ENCODE measurements at regions of chr4 and their contacts with region 1.

Region 1: GRCh38 chr4:44927399-44928380 is 201.3 kb upstream of the GNPDA2 start:
- DNase-seq: peak; percentile 23
- ATAC-seq: peak; percentile 57; the same call in 2 of the 3 replicates
- H3K4me3 ChIP-seq: no peak overlapping the region
- H3K27ac ChIP-seq: no peak overlapping the region
- H3K4me1 ChIP-seq: no peaks in the 10 kb centered on the region
- H3K27me3 ChIP-seq: no peaks in the 10 kb centered on the region
- CTCF ChIP-seq: peak; percentile 42
- EP300 ChIP-seq: no peak
- POLR2A ChIP-seq: no peak
- RAD21 ChIP-seq: no peak

Region 2: DNA sequence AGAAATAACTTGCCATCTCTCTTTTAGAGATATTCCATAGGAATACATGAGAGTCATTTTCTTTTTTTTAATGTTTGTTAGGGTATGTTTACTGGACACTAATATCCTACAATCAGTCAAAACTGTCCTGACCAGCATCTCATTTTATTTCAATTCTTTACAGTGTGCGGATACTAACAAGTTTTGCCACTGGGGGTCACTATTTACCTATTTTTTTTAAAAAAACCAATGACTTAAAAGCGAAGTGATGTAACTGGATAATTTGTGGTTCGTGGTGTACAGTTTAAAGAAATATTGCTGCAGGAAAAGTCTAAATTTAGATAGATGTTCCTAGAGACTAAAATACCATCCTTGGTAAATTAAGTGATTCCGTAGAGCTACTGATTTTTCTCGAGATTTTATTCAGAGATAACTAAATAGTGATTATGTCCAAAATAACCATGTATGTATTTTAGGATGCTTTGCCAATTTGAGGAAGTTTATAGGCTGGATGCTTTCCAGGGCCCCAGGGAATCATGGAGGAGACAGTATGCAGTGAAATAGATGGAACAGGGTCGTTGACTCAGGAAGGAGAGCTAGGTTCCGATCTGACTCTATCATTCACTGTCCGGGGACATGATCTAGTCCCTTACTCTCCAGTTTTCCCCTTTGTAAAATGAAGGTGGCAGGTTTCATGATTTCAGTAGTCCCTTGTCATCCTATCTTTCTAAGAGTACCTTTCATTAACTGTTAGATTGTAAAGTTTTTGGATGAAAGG is 167.4 kb before region 1 on chr4:
- CTCF ChIA-PET with region 1: no interaction called
- POLR2A ChIA-PET with region 1: no interaction called
- in situ Hi-C with region 1: no loop called
- intact Hi-C with region 1: loop called (anchors 5 kb)
- DNase-seq: peak; percentile 7
- ATAC-seq: peak; percentile 67
- H3K4me3 ChIP-seq: no peak overlapping the region
- H3K27ac ChIP-seq: no peak overlapping the region
- H3K4me1 ChIP-seq: no peaks in the 10 kb centered on the region
- H3K27me3 ChIP-seq: no peaks in the 10 kb centered on the region; a peak in 1 of 5 replicates
- CTCF ChIP-seq: peak; percentile 46; the same call in 1 of the 2 replicates
- EP300 ChIP-seq: no peak
- POLR2A ChIP-seq: no peak
- RAD21 ChIP-seq: no peak

Region 3: DNA sequence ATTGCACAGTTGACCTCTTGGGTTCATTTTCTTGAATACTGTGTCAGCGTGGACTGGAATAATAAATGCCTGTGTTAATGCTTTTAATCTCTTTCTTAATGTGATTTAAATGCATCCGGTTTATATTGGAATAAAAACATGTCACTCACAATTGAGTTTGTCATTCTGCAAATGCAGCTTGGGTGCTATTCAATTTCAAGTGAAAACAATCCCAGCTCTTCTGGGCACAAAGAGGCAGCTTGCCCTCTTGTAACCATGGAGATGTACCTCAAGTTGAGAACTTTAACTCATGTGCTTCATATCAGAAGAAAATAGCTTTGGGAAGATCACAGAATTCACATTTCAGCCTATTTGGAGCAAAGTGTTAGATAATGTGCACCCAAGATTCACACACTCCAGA is 154.4 kb after region 1 on chr4:
- CTCF ChIA-PET with region 1: no interaction called
- POLR2A ChIA-PET with region 1: no interaction called
- in situ Hi-C with region 1: no loop called
- intact Hi-C with region 1: no loop called
- DNase-seq: no peak
- ATAC-seq: no peak
- H3K4me3 ChIP-seq: no peak overlapping the region
- H3K27ac ChIP-seq: no peak overlapping the region
- H3K4me1 ChIP-seq: no peaks in the 10 kb centered on the region
- H3K27me3 ChIP-seq: no peaks in the 10 kb centered on the region
- CTCF ChIP-seq: no peak
- EP300 ChIP-seq: no peak
- POLR2A ChIP-seq: no peak
- RAD21 ChIP-seq: no peak

Region 4: GRCh38 chr4:45147866-45148265 is 220.2 kb after region 1 on chr4:
- CTCF ChIA-PET with region 1: no interaction called
- POLR2A ChIA-PET with region 1: no interaction called
- in situ Hi-C with region 1: no loop called
- intact Hi-C with region 1: no loop called
- DNase-seq: no peak
- ATAC-seq: no peak
- H3K4me3 ChIP-seq: no peak overlapping the region
- H3K27ac ChIP-seq: no peak overlapping the region
- H3K4me1 ChIP-seq: no peaks in the 10 kb centered on the region
- H3K27me3 ChIP-seq: no peaks in the 10 kb centered on the region
- CTCF ChIP-seq: no peak
- EP300 ChIP-seq: no peak
- POLR2A ChIP-seq: no peak
- RAD21 ChIP-seq: no peak

Region 5: DNA sequence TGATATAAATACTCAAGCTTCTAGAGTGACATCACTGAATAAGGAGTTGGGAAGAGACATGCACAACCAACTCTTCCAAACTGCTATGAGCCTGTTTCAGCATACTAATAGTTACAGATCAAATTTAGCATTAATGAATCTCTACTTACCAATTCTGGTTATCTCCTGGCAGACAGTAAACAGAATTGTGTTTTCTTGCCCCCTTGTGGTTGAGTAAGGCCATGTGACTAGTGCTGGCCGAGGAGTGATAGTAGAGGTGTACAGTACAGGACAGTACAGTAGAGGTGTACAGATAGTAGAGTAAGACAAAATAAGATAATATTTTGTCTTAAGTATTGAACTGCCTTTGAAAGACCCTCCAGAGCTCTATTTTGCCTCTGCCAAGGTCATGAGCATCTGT is 514.8 kb after region 1 on chr4:
- CTCF ChIA-PET with region 1: interaction called, 3 read pairs
- POLR2A ChIA-PET with region 1: no interaction called
- in situ Hi-C with region 1: no loop called
- intact Hi-C with region 1: loop called (anchors 1 kb)
- DNase-seq: no peak
- ATAC-seq: peak; percentile 63
- H3K4me3 ChIP-seq: no peak overlapping the region
- H3K27ac ChIP-seq: no peak overlapping the region
- H3K4me1 ChIP-seq: no peaks in the 10 kb centered on the region
- H3K27me3 ChIP-seq: no peaks in the 10 kb centered on the region
- CTCF ChIP-seq: peak; percentile 14; the same call in 1 of the 2 replicates
- EP300 ChIP-seq: no peak
- POLR2A ChIP-seq: no peak
- RAD21 ChIP-seq: no peak

Region 6: GRCh38 chr4:45741897-45742296 is 814.2 kb after region 1 on chr4:
- CTCF ChIA-PET with region 1: no interaction called
- POLR2A ChIA-PET with region 1: no interaction called
- in situ Hi-C with region 1: no loop called
- intact Hi-C with region 1: loop called (anchors 5 kb)
- DNase-seq: peak; percentile 28
- ATAC-seq: peak; percentile 69
- H3K4me3 ChIP-seq: no peak overlapping the region
- H3K27ac ChIP-seq: no peak overlapping the region
- H3K4me1 ChIP-seq: no peaks in the 10 kb centered on the region
- H3K27me3 ChIP-seq: no peaks in the 10 kb centered on the region
- CTCF ChIP-seq: no peak
- EP300 ChIP-seq: no peak
- POLR2A ChIP-seq: no peak
- RAD21 ChIP-seq: no peak